ENCODE measurements at regions of chr16 and their contacts with region 1.

Region 1: DNA sequence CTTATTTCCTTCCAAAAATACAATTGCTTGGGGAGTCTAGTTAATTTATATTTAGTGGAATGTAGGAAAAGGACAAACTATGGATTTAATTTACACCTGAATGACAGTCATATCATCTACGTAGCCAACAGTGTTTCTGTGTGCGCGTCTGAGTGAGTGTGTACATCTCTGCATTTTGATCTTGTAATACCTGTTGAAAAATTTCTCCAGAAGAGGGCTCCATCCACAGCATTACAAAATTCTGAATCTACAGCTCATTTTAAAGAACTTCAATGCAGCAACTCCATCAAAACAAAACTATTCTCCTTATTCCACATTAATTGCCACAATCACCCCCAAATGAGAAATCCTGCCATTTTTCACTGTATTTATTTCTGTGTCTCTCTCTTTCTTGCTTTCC is 3.9 kb downstream of the CDH13 start:
- DNase-seq: no peak
- H3K4me3 ChIP-seq: no peak overlapping the region
- H3K4me3 Mint-ChIP-seq: no peak overlapping the region
- H3K27ac ChIP-seq: no peak overlapping the region
- H3K27ac Mint-ChIP-seq: no peak overlapping the region
- H3K4me1 ChIP-seq: no peaks in the 10 kb centered on the region
- H3K4me1 Mint-ChIP-seq: peaks cover 0 to 7% (median 1%) of the 10 kb centered on the region in 4 donors
- H3K27me3 ChIP-seq: peaks cover 11% of the 10 kb centered on the region
- H3K27me3 Mint-ChIP-seq: peaks cover 29 to 36% of the 10 kb centered on the region in 2 donors

Region 2: DNA sequence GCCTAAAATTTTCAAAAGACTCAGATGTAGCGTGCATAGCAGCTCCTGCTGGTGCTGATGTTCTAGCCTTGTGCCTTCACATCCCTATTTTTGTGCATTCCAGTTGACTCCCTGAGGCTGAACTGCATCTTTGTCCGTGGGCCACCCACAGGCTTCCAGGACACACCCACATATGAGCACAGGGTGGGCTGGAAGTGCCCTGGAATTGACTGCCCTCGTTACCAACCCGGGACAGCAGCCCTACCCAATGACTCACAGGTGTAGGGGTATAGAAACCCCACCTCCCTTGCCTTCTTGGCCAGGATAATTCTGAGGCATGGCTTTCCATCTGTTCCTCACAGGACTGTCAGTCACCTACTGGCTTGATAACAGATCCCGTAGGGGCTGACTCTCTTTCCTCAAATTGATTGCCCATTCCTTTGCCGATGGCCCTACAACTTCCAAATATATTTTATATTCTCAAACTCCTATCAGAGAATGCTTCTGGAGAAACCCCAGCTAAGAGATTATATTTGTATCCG is 69.8 kb before region 1 on chr16:
- CTCF ChIA-PET with region 1: no interaction called
- POLR2A ChIA-PET with region 1: no interaction called
- intact Hi-C with region 1: no loop called
- DNase-seq: no peak
- H3K4me3 ChIP-seq: no peak overlapping the region
- H3K4me3 Mint-ChIP-seq: no peak overlapping the region
- H3K27ac ChIP-seq: no peak overlapping the region
- H3K27ac Mint-ChIP-seq: no peak overlapping the region
- H3K4me1 ChIP-seq: no peaks in the 10 kb centered on the region
- H3K4me1 Mint-ChIP-seq: no peaks in the 10 kb centered on the region
- H3K27me3 ChIP-seq: no peaks in the 10 kb centered on the region
- H3K27me3 Mint-ChIP-seq: peaks cover 2 to 3% of the 10 kb centered on the region in 2 donors

Region 3: DNA sequence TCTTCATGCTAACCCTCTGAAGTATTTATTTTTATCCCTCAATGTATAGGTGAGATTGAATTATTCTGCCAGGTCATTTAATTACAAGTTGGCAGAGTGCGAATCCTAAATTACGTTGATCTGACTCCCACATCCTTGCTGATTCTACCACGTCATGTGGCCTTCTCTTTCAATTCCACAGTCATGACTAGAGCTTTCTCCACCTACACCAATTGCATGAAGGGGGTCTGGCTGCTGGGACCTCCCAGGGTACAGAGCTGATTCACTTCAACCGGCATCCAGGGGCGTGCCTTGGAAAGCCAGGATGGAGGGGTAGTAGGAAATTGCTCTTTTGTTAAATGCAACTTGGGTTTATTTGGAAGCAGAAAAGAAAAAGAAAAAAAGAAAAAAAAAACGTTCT is 45.0 kb before region 1 on chr16:
- CTCF ChIA-PET with region 1: no interaction called
- POLR2A ChIA-PET with region 1: no interaction called
- intact Hi-C with region 1: no loop called
- DNase-seq: no peak
- H3K4me3 ChIP-seq: no peak overlapping the region
- H3K4me3 Mint-ChIP-seq: no peak overlapping the region
- H3K27ac ChIP-seq: no peak overlapping the region
- H3K27ac Mint-ChIP-seq: no peak overlapping the region
- H3K4me1 ChIP-seq: no peaks in the 10 kb centered on the region
- H3K4me1 Mint-ChIP-seq: no peaks in the 10 kb centered on the region
- H3K27me3 ChIP-seq: no peaks in the 10 kb centered on the region
- H3K27me3 Mint-ChIP-seq: peaks cover 3 to 7% of the 10 kb centered on the region in 2 donors

Region 4: DNA sequence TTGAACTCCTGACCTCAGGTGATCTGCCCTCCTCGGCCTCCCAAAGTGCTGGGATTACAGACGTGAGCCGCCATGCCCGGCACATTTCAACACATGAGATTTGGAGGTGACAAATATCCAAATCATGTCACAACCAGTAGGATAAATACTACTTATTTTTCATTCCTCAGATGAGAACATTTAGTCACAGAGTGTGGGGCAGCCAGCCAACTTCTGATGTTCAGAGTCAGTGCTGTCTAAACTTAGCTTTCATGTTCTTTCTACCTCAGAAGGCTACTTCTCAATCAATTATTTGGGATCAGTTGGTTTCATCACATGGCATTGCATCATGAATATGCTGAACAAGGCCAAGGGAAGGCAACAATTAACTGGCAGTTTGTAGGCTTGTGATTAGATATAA is 130.5 kb after region 1 on chr16:
- CTCF ChIA-PET with region 1: no interaction called
- POLR2A ChIA-PET with region 1: no interaction called
- intact Hi-C with region 1: no loop called
- DNase-seq: no peak
- H3K4me3 ChIP-seq: no peak overlapping the region
- H3K4me3 Mint-ChIP-seq: peak overlapping the region in 1 of 8 donors; percentile 18
- H3K27ac ChIP-seq: no peak overlapping the region
- H3K27ac Mint-ChIP-seq: no peak overlapping the region
- H3K4me1 ChIP-seq: no peaks in the 10 kb centered on the region
- H3K4me1 Mint-ChIP-seq: peaks cover 7 to 19% (median 7%) of the 10 kb centered on the region in 4 donors
- H3K27me3 ChIP-seq: no peaks in the 10 kb centered on the region
- H3K27me3 Mint-ChIP-seq: peaks cover 0 to 3% of the 10 kb centered on the region in 2 donors

Region 5: DNA sequence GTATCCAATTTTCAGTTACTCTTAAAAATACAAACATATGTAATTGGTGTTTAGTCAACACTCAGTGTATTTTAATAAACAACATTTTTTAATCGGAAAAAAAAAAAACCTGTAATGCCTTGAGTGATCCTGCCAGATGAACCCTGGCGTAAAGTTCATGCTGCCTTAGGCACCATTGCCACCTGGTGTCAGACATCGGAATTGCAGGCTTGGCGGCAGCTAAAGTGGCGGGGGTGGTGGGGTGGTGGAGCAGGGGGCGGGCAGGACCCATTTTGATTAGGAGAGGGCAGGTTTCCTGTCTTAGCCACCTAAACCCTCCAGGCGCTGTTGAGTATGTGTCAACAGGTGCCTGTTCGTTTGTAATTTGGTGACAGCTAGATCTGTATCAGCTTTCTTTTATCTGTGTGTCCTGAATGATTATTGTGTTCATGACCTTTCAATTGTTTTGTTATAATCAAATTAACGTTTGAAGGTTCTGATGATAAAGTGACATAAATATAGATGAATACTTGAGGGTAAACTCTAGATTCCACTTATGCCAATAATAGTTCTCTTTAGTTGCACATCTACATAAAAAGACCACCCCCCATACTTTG is 584.8 kb after region 1 on chr16:
- CTCF ChIA-PET with region 1: interaction called, 5 read pairs
- POLR2A ChIA-PET with region 1: no interaction called
- intact Hi-C with region 1: loop called (anchors 5 kb)
- DNase-seq: peak in 4 of 5 donors; percentile 6 to 34 (median 13)
- H3K4me3 ChIP-seq: no peak overlapping the region
- H3K4me3 Mint-ChIP-seq: no peak overlapping the region
- H3K27ac ChIP-seq: no peak overlapping the region
- H3K27ac Mint-ChIP-seq: no peak overlapping the region
- H3K4me1 ChIP-seq: no peaks in the 10 kb centered on the region
- H3K4me1 Mint-ChIP-seq: no peaks in the 10 kb centered on the region
- H3K27me3 ChIP-seq: no peaks in the 10 kb centered on the region
- H3K27me3 Mint-ChIP-seq: no peaks in the 10 kb centered on the region

Measured in CD4-positive, alpha-beta memory T cell (primary cell).